AG04449 (cell line): ENCODE measurements at regions of chr2 and their contacts with region 1.

Region 1: GRCh38 chr2:26088032-26088643 is 54.3 kb downstream of the RAB10 start:
- DNase-seq: no peak
- H3K4me3 ChIP-seq: no peak overlapping the region
- CTCF ChIP-seq: peak; percentile 60

Region 2: DNA sequence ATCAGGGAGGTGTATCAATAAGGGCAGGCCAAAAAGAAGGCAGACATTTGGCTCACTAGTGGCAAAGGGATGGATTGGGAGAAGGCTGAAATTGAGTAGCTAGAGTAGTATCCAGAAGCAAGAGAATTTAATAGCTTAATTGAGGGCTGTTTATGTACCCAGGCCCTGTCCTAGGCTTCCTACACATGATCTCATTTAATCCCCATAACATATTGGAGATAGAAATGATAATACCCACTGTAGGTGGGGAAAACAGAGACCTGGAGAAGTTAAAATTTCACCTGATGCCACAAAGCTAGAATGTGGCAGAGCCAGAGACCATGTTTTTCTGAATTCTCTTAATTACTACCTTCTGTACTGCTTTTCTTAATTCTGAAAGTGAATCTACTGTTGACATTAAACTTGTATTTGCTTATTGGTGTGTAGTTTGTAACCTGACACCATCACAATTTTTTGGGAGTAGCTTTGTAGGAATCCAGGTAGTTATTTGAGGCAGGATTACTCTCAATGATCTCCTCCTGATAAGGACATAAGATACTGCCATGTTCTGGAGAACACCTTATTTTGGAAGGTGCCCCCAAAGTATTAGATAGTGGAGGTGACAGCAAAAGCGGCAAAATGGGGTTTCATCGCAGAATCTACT is 12.1 kb before region 1 on chr2:
- CTCF ChIA-PET with region 1: interaction called, 33 read pairs
- POLR2A ChIA-PET with region 1: no interaction called
- DNase-seq: no peak
- H3K4me3 ChIP-seq: no peak overlapping the region
- CTCF ChIP-seq: no peak

Region 3: DNA sequence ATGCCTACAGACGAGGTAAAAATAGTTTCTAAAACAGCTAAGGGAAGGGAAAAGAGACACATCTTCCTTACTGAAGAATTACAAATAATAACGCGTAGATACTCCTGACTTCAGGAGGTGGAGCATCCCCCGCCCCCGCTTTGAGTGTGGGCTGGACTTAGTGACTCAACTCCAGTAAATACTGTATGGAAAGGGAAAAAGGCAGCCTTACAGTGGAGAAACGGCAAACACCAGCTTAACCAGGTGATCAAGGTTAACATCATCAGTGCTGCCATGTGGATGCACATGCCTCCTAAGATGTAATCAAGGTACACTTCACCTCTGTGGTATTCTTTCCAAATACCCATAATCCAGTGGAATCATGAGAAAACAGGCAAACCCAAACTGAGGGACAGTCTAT is 204.5 kb after region 1 on chr2:
- CTCF ChIA-PET with region 1: no interaction called
- POLR2A ChIA-PET with region 1: no interaction called
- DNase-seq: no peak
- H3K4me3 ChIP-seq: no peak overlapping the region
- CTCF ChIP-seq: no peak